B cell (primary cell): ENCODE measurements at regions of chr12 and their contacts with region 1.

Region 1: GRCh38 chr12:57280211-57281062 is 29.4 kb upstream of the STAC3 start:
- DNase-seq: peak; percentile 75
- ATAC-seq: peak; percentile 95
- H3K4me3 ChIP-seq: no peak overlapping the region
- H3K4me3 Mint-ChIP-seq: peak overlapping the region; percentile 71
- H3K27ac ChIP-seq: peak overlapping the region; percentile 53 to 71
- H3K27ac Mint-ChIP-seq: peak overlapping the region; percentile 90
- H3K4me1 ChIP-seq: peaks cover 15 to 17% of the 10 kb centered on the region in 2 donors
- H3K4me1 Mint-ChIP-seq: peaks cover 30% of the 10 kb centered on the region
- H3K27me3 ChIP-seq: no peaks in the 10 kb centered on the region
- H3K27me3 Mint-ChIP-seq: no peaks in the 10 kb centered on the region
- CTCF ChIP-seq: no peak

Region 2: GRCh38 chr12:57261428-57261865 is 19.0 kb before region 1 on chr12:
- CTCF ChIA-PET with region 1: interaction called, 5 read pairs
- POLR2A ChIA-PET with region 1: interaction called, 4 read pairs
- intact Hi-C with region 1: loop called (anchors 1 kb)
- DNase-seq: no peak
- ATAC-seq: no peak
- H3K4me3 ChIP-seq: no peak overlapping the region
- H3K4me3 Mint-ChIP-seq: no peak overlapping the region
- H3K27ac ChIP-seq: no peak overlapping the region
- H3K27ac Mint-ChIP-seq: no peak overlapping the region
- H3K4me1 ChIP-seq: peaks cover 0 to 6% of the 10 kb centered on the region in 2 donors
- H3K4me1 Mint-ChIP-seq: peaks cover 9% of the 10 kb centered on the region
- H3K27me3 ChIP-seq: no peaks in the 10 kb centered on the region
- H3K27me3 Mint-ChIP-seq: no peaks in the 10 kb centered on the region
- CTCF ChIP-seq: no peak

Region 3: GRCh38 chr12:57299514-57300016 is 19.1 kb after region 1 on chr12:
- CTCF ChIA-PET with region 1: no interaction called
- POLR2A ChIA-PET with region 1: no interaction called
- intact Hi-C with region 1: no loop called
- DNase-seq: no peak
- ATAC-seq: no peak
- H3K4me3 ChIP-seq: no peak overlapping the region
- H3K4me3 Mint-ChIP-seq: no peak overlapping the region
- H3K27ac ChIP-seq: no peak overlapping the region
- H3K27ac Mint-ChIP-seq: peak overlapping the region; percentile 34
- H3K4me1 ChIP-seq: no peaks in the 10 kb centered on the region
- H3K4me1 Mint-ChIP-seq: no peaks in the 10 kb centered on the region
- H3K27me3 ChIP-seq: no peaks in the 10 kb centered on the region
- H3K27me3 Mint-ChIP-seq: no peaks in the 10 kb centered on the region
- CTCF ChIP-seq: no peak